Heart right ventricle (tissue), 16 donors: ENCODE measurements at regions of chr2 and their contacts with region 1.

Region 1: GRCh38 chr2:231152800-231153557 is 28.1 kb upstream of the HTR2B start:
- DNase-seq: no peak
- ATAC-seq: no peak
- H3K4me3 ChIP-seq: no peak overlapping the region
- H3K27ac ChIP-seq: no peak overlapping the region
- H3K4me1 ChIP-seq: no peaks in the 10 kb centered on the region
- H3K27me3 ChIP-seq: no peaks in the 10 kb centered on the region
- CTCF ChIP-seq: no peak

Region 2: GRCh38 chr2:231138699-231139098 is 14.3 kb before region 1 on chr2:
- intact Hi-C with region 1: loop called in 1 of 10 experiments (anchors 1 kb)
- DNase-seq: no peak
- ATAC-seq: peak in 3 of 8 donors; percentile 28 to 42 (median 31)
- H3K4me3 ChIP-seq: no peak overlapping the region
- H3K27ac ChIP-seq: no peak overlapping the region
- H3K4me1 ChIP-seq: peaks cover 0 to 16% (median 2%) of the 10 kb centered on the region in 9 donors
- H3K27me3 ChIP-seq: no peaks in the 10 kb centered on the region
- CTCF ChIP-seq: no peak

Region 3: GRCh38 chr2:231227309-231228162 is 74.6 kb after region 1 on chr2:
- intact Hi-C with region 1: no loop called
- DNase-seq: peak in 1 of 2 donors; percentile 68
- ATAC-seq: peak; percentile 89 to 96 (median 94)
- H3K4me3 ChIP-seq: no peak overlapping the region
- H3K27ac ChIP-seq: peak overlapping the region in 2 of 10 donors; percentile 10 to 42
- H3K4me1 ChIP-seq: peaks cover 0 to 7% (median 0%) of the 10 kb centered on the region in 9 donors
- H3K27me3 ChIP-seq: no peaks in the 10 kb centered on the region
- CTCF ChIP-seq: peak; percentile 55 to 85 (median 80)